Endothelial cell of umbilical vein (primary cell): ENCODE measurements at regions of chr9 and their contacts with region 1.

Region 1: GRCh38 chr9:20684035-20684872 is at the start of gene FOCAD:
- DNase-seq: peak; percentile 97
- H3K4me3 ChIP-seq: peak within 1 kb of the TSS; percentile 69 to 83 (median 73)
- H3K27ac ChIP-seq: peak within 1 kb of the TSS; percentile 91
- H3K4me1 ChIP-seq: peaks cover 30% of the 10 kb centered on the region
- H3K27me3 ChIP-seq: no peaks in the 10 kb centered on the region
- CTCF ChIP-seq: no peak
- POLR2A ChIP-seq: peak; percentile 97
- total RNA-seq, gene FOCAD: 59.4 and 66.9 TPM in 2 replicates

Region 2: GRCh38 chr9:20356403-20357035 is 327.7 kb before region 1 on chr9:
- CTCF ChIA-PET with region 1: interaction called, 4 read pairs
- POLR2A ChIA-PET with region 1: no interaction called
- dilution Hi-C with region 1: no loop called
- intact Hi-C with region 1: loop called (anchors 1 kb)
- DNase-seq: peak; percentile 96
- H3K4me3 ChIP-seq: peak overlapping the region in 2 of 3 experiments; percentile 13 to 53
- H3K27ac ChIP-seq: peak overlapping the region; percentile 32
- H3K4me1 ChIP-seq: peaks cover 19% of the 10 kb centered on the region
- H3K27me3 ChIP-seq: no peaks in the 10 kb centered on the region
- CTCF ChIP-seq: peak; percentile 66 to 82
- POLR2A ChIP-seq: no peak

Region 3: DNA sequence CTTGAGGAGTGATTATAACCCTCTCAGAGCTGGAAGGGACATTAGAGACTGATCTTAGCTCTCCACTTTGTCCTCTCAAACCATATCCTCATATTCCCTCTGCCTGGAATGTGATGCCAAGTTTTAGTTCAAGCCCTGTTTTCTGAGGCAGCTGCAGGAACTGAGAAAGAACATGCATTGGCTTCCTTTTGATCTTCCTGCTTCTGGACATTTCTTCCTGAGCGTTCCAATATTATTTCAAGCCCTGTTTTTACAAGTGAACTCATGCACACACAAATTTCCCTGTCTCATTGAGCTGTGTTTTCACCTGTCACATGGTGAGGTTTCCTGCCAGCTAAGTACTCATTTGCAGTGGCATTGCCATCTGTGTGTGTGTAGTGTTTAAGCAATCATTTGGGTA is 16.8 kb after region 1 on chr9:
- CTCF ChIA-PET with region 1: interaction called, 15 read pairs
- POLR2A ChIA-PET with region 1: interaction called, 26 read pairs
- dilution Hi-C with region 1: no loop called
- intact Hi-C with region 1: no loop called
- DNase-seq: peak; percentile 94
- H3K4me3 ChIP-seq: peak overlapping the region in 1 of 3 experiments; percentile 26
- H3K27ac ChIP-seq: peak overlapping the region; percentile 76
- H3K4me1 ChIP-seq: peaks cover 26% of the 10 kb centered on the region
- H3K27me3 ChIP-seq: no peaks in the 10 kb centered on the region
- CTCF ChIP-seq: no peak
- POLR2A ChIP-seq: no peak

Region 4: DNA sequence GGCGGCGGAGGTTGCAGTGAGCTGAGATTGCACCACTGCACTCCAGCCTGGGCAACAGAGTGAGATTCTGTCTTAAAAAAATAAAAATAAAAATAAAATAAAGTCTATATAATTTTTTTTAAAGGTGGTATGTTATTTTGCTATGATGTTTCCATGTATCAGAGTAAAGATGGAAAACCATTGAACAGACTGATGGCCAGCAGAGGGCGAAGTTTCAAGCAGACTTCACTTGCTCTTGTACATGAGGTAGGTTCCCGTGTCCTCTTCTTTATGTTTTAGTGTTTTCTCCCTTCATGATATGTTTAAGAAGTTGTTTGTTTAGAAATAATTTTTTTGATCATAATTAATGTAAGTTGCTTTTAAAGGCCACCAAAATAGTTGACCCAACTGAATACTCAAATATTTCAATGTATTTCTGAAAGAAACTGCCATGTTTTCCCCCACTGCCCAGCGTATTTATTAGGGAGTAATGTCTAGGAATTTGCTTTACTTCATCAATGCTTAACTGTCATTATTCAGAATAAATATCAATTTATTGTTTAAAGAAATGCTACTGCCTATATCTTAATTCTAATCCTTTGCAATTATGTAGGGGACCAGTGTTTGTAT is 200.8 kb after region 1 on chr9:
- CTCF ChIA-PET with region 1: interaction called, 16 read pairs
- POLR2A ChIA-PET with region 1: no interaction called
- dilution Hi-C with region 1: no loop called
- intact Hi-C with region 1: no loop called
- DNase-seq: peak; percentile 51
- H3K4me3 ChIP-seq: no peak overlapping the region
- H3K27ac ChIP-seq: no peak overlapping the region
- H3K4me1 ChIP-seq: no peaks in the 10 kb centered on the region
- H3K27me3 ChIP-seq: no peaks in the 10 kb centered on the region
- CTCF ChIP-seq: peak; percentile 44 to 59
- POLR2A ChIP-seq: no peak

Region 5: DNA sequence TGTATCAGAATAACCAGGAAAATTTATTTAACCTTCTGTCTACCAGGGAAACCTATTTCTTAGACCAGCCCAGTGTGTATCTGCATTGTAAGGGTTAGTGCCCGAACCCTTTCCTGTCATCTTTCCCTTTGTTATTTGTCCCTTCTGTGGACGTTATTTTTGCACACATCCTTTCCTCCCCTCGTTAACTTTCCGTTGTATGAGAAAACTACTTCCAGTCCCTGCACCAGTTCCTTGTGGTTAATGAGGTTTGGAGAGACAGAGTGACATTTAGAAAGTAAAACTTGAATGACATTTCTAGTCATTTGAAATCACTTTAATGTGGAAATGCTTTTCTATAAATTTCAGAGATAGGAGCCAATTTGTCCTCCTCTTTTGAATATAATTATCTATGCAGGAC is 397.7 kb after region 1 on chr9:
- CTCF ChIA-PET with region 1: no interaction called
- POLR2A ChIA-PET with region 1: no interaction called
- dilution Hi-C with region 1: no loop called
- intact Hi-C with region 1: no loop called
- DNase-seq: no peak
- H3K4me3 ChIP-seq: no peak overlapping the region
- H3K27ac ChIP-seq: no peak overlapping the region
- H3K4me1 ChIP-seq: peaks cover 13% of the 10 kb centered on the region
- H3K27me3 ChIP-seq: peaks cover 0 to 2% of the 10 kb centered on the region in 2 experiments
- CTCF ChIP-seq: no peak
- POLR2A ChIP-seq: no peak